ENCODE measurements at regions of chr7 and their contacts with region 1.

Region 1: DNA sequence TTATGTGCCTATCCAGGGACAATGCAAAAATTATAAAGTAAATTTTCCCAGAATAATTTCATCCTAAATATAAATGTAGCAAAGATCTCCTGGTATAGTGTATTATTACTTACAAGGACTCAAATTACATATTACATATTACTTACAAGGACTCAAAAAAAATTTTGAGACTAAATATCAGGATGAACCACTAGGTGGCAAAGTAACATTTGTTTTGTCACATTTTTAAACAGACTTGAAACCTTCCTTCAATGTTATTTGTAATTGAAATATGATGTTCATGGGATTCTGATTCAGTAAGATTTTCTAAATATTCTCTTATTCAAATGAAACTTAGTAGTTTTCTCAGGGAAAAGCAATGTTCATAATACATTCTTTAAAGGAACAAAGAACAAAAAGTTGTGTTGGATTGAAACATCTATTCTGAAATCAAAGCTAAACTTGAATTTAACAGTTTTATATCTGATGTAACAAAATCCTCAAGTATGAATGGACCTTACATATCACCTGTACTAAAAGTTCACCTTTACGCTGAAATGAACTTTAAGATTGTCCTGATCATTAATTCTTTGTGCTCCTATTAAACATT is 74.3 kb upstream of the GNAI1 start:
- DNase-seq: peak in 2 of 14 experiments; percentile 20 to 22
- ATAC-seq: no peak
- H3K4me3 ChIP-seq: no peak overlapping the region
- H3K4me3 Mint-ChIP-seq: no peak overlapping the region
- H3K27ac ChIP-seq: no peak overlapping the region
- H3K27ac Mint-ChIP-seq: no peak overlapping the region
- H3K4me1 ChIP-seq: no peaks in the 10 kb centered on the region
- H3K4me1 Mint-ChIP-seq: no peaks in the 10 kb centered on the region
- H3K27me3 ChIP-seq: no peaks in the 10 kb centered on the region
- H3K27me3 Mint-ChIP-seq: no peaks in the 10 kb centered on the region
- CTCF ChIP-seq: peak; percentile 49

Region 2: GRCh38 chr7:80453699-80454340 is 393.5 kb after region 1 on chr7:
- CTCF ChIA-PET with region 1: no interaction called
- POLR2A ChIA-PET with region 1: no interaction called
- intact Hi-C with region 1: loop called (anchors 1 to 5 kb)
- DNase-seq: peak in 2 of 14 experiments; percentile 8 to 13
- ATAC-seq: no peak
- H3K4me3 ChIP-seq: no peak overlapping the region
- H3K4me3 Mint-ChIP-seq: no peak overlapping the region
- H3K27ac ChIP-seq: no peak overlapping the region
- H3K27ac Mint-ChIP-seq: no peak overlapping the region
- H3K4me1 ChIP-seq: no peaks in the 10 kb centered on the region
- H3K4me1 Mint-ChIP-seq: no peaks in the 10 kb centered on the region
- H3K27me3 ChIP-seq: no peaks in the 10 kb centered on the region
- H3K27me3 Mint-ChIP-seq: no peaks in the 10 kb centered on the region
- CTCF ChIP-seq: no peak

Region 3: DNA sequence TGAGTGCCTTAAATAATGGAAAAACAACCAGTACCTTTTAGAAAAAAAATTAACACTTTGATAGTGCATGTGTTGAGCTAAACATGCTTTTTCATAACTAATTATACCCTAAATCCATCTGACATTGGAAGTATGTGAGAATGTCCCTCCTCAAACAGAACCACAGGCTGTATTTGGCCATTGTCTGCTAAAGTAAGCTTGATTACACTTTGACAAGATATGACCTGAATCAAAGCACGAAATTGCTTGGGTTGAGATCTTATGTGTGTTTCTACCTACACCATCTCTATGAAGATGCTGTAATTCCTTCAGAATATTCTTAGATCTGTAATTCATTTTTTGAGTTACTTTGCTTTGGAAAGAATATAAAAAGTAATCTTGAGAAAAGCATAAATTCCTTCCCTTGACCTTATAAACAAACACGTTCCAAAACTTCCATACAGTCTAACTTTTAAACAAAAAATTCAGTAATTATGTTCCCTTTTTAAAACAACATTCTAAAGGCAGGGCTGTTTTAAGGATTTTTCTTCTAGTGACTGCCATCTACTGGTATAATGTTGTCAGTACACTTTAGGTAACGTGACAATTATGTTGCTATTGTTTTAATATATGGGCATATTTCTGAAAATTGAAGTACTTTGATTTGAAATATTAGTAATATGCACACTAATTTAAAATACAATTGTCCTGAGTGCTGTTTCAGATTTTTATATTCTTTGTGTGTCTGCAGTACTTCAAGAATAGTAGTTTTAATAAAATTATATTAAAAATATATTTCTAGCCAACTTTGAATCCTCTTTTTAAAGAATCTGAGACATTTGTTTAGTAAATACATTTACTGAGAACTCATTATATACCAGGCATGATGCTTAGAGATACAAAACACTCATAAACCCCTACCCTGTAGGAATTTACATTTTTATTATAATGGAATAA is 599.1 kb after region 1 on chr7:
- CTCF ChIA-PET with region 1: no interaction called
- POLR2A ChIA-PET with region 1: no interaction called
- intact Hi-C with region 1: loop called in 1 of 2 experiments (anchors 2 kb)
- DNase-seq: peak in 2 of 14 experiments; percentile 6 to 34
- ATAC-seq: no peak
- H3K4me3 ChIP-seq: no peak overlapping the region
- H3K4me3 Mint-ChIP-seq: no peak overlapping the region
- H3K27ac ChIP-seq: no peak overlapping the region
- H3K27ac Mint-ChIP-seq: no peak overlapping the region
- H3K4me1 ChIP-seq: no peaks in the 10 kb centered on the region
- H3K4me1 Mint-ChIP-seq: no peaks in the 10 kb centered on the region
- H3K27me3 ChIP-seq: no peaks in the 10 kb centered on the region
- H3K27me3 Mint-ChIP-seq: no peaks in the 10 kb centered on the region
- CTCF ChIP-seq: peak; percentile 77

Measured in CD4-positive, alpha-beta T cell (primary cell).